ENCODE measurements at regions of chr4 and their contacts with region 1.

Region 1: GRCh38 chr4:112031712-112032328 is 113.4 kb upstream of the FAM241A start:
- DNase-seq: peak; percentile 48
- H3K27ac ChIP-seq: no peak overlapping the region
- CTCF ChIP-seq: peak; percentile 71

Region 2: DNA sequence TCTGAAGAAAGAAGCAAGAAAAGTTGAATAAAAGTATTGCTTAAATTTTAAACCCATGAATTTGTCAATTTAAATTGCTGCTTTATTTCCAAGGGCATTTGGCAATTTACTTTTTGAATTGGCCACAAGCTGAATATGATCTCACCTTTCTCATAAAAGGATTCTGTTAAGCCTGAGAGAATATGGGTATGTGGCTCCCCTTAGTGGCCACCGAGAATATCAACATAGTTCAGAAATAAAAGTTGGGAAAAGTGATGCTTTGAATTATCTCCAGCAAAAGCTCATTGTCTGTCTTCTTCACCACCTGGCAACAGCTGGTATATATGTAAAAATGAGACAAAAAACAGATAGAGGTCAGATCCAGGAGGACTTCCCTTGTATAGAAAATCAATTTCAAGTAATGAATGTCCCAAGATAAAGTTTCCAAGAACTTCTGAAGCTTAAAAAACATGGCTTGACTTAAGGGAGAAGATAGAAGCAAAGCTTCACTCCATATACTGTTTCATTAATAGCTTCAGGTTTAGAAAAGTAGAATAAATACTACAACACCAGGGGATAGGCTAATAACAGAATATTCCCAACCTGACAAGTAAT is 177.2 kb before region 1 on chr4:
- CTCF ChIA-PET with region 1: interaction called, 14 read pairs
- POLR2A ChIA-PET with region 1: no interaction called
- DNase-seq: peak; percentile 16
- H3K27ac ChIP-seq: no peak overlapping the region
- CTCF ChIP-seq: peak; percentile 69

Region 3: DNA sequence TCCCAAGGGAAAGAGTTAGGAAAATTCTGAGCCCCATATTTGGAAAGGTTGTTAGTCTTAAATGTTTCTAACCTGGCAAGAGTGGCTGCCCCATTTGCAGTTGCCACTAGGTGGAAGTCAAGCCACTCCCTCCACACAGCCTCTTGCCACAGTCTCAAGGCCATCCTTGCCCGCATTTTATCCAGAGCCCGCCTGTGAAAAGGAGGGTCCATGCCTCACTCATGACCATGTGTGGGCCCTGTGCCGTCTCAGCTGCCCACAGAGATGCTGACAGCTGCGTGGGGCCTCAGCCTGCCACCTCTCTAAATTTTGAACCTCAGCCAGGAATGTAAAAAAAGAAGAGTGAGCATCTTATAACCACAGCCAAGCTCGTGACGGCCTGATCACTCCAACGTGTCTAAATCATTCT is 88.0 kb before region 1 on chr4:
- CTCF ChIA-PET with region 1: interaction called, 46 read pairs
- POLR2A ChIA-PET with region 1: no interaction called
- DNase-seq: peak; percentile 65
- H3K27ac ChIP-seq: no peak overlapping the region
- CTCF ChIP-seq: no peak